ENCODE measurements at regions of chr1 and their contacts with region 1.

Region 1: GRCh38 chr1:172609528-172609927 is 49.4 kb upstream of the FASLG start:
- DNase-seq: peak in 4 of 5 donors; percentile 34 to 41 (median 38)
- H3K4me3 ChIP-seq: no peak overlapping the region
- H3K4me3 Mint-ChIP-seq: no peak overlapping the region
- H3K27ac ChIP-seq: no peak overlapping the region
- H3K27ac Mint-ChIP-seq: peak overlapping the region in 1 of 7 donors; percentile 43
- H3K4me1 ChIP-seq: no peaks in the 10 kb centered on the region
- H3K4me1 Mint-ChIP-seq: peaks cover 4 to 9% (median 6%) of the 10 kb centered on the region in 4 donors
- H3K27me3 ChIP-seq: no peaks in the 10 kb centered on the region
- H3K27me3 Mint-ChIP-seq: no peaks in the 10 kb centered on the region

Region 2: GRCh38 chr1:172581779-172582178 is 27.7 kb before region 1 on chr1:
- CTCF ChIA-PET with region 1: no interaction called
- POLR2A ChIA-PET with region 1: no interaction called
- intact Hi-C with region 1: no loop called
- DNase-seq: no peak
- H3K4me3 ChIP-seq: no peak overlapping the region
- H3K4me3 Mint-ChIP-seq: no peak overlapping the region
- H3K27ac ChIP-seq: no peak overlapping the region
- H3K27ac Mint-ChIP-seq: peak overlapping the region in 2 of 7 donors; percentile 5 to 19
- H3K4me1 ChIP-seq: no peaks in the 10 kb centered on the region
- H3K4me1 Mint-ChIP-seq: peaks cover 4 to 9% (median 6%) of the 10 kb centered on the region in 4 donors
- H3K27me3 ChIP-seq: no peaks in the 10 kb centered on the region
- H3K27me3 Mint-ChIP-seq: no peaks in the 10 kb centered on the region

Region 3: DNA sequence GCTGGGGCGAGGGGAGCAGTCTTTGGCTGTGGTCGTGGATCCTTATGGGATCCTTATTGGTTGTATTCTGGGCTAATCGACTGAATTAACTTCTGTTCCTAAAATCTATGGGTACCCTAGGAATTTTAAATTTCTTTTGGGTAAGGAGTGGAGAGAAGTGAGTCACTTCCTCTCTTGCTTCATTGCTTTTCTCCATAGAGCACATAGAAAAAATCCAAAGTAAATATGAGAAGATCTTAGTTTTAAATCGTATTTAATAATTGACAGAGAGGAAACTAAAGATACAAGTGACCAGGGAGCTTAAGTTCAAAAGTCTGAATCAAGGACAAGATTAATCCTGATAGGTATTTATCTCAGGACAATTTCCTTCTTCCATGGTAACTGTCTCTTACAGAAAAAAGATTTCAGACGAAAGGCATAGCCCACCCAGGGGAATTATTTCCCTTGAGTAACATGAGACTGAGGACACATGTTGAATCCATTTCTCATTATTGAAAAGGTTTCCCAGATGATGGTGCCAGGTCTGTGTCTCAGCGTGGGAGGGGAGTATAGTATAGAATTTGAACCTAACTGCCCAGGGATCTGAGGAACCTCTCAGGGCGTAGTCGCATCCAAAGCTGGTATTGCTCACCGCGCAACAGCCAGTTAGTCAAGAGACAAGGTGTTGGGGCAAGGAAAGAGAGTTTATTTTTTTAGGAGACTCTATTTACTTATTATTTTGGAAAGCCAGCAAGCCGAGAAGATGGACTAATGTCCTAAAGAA is 20.7 kb after region 1 on chr1:
- CTCF ChIA-PET with region 1: interaction called, 11 read pairs
- POLR2A ChIA-PET with region 1: interaction called, 4 read pairs
- intact Hi-C with region 1: no loop called
- DNase-seq: no peak
- H3K4me3 ChIP-seq: no peak overlapping the region
- H3K4me3 Mint-ChIP-seq: peak overlapping the region in 2 of 8 donors; percentile 15 to 50
- H3K27ac ChIP-seq: no peak overlapping the region
- H3K27ac Mint-ChIP-seq: peak overlapping the region in 1 of 7 donors; percentile 10
- H3K4me1 ChIP-seq: peaks cover 31% of the 10 kb centered on the region
- H3K4me1 Mint-ChIP-seq: peaks cover 28 to 64% (median 43%) of the 10 kb centered on the region in 4 donors
- H3K27me3 ChIP-seq: no peaks in the 10 kb centered on the region
- H3K27me3 Mint-ChIP-seq: no peaks in the 10 kb centered on the region

Region 4: GRCh38 chr1:172638885-172639831 is 29.6 kb after region 1 on chr1:
- CTCF ChIA-PET with region 1: interaction called, 7 read pairs
- POLR2A ChIA-PET with region 1: interaction called, 4 read pairs
- intact Hi-C with region 1: loop called (anchors 1 kb)
- DNase-seq: peak; percentile 73 to 89 (median 77)
- H3K4me3 ChIP-seq: peak overlapping the region; percentile 25 to 27
- H3K4me3 Mint-ChIP-seq: peak overlapping the region; percentile 73 to 86 (median 80)
- H3K27ac ChIP-seq: peak overlapping the region; percentile 38
- H3K27ac Mint-ChIP-seq: peak overlapping the region; percentile 82 to 94 (median 90)
- H3K4me1 ChIP-seq: peaks cover 74% of the 10 kb centered on the region
- H3K4me1 Mint-ChIP-seq: peaks cover 62 to 77% (median 72%) of the 10 kb centered on the region in 4 donors
- H3K27me3 ChIP-seq: no peaks in the 10 kb centered on the region
- H3K27me3 Mint-ChIP-seq: no peaks in the 10 kb centered on the region

Region 5: DNA sequence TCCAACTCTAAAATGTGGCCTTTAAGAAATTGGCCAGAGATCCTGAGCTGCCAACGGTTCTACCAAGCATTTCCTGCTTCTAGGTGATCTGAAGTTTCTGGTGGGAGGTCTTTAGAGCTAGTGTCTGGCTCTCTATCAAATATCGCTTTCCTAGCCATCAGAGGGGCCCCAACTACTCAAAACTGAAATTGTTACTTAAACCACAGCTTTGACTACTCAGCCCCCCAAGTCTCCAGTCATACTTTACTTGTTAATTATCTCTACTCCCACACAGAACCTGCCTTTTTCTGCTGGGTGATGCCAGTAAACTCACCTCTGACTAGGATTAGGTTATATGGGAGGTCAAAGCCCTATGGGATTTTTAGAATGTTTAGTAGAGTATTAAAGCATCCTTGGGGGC is 144.4 kb after region 1 on chr1:
- CTCF ChIA-PET with region 1: no interaction called
- POLR2A ChIA-PET with region 1: no interaction called
- intact Hi-C with region 1: no loop called
- DNase-seq: no peak
- H3K4me3 ChIP-seq: no peak overlapping the region
- H3K4me3 Mint-ChIP-seq: no peak overlapping the region
- H3K27ac ChIP-seq: no peak overlapping the region
- H3K27ac Mint-ChIP-seq: peak overlapping the region in 1 of 7 donors; percentile 9
- H3K4me1 ChIP-seq: no peaks in the 10 kb centered on the region
- H3K4me1 Mint-ChIP-seq: peaks cover 0 to 3% (median 2%) of the 10 kb centered on the region in 4 donors
- H3K27me3 ChIP-seq: no peaks in the 10 kb centered on the region
- H3K27me3 Mint-ChIP-seq: peaks cover 3 to 14% of the 10 kb centered on the region in 2 donors

Measured in CD4-positive, alpha-beta memory T cell (primary cell).